Esophagus muscularis mucosa (tissue), 4 donors: ENCODE measurements at regions of chr16 and their contacts with region 1.

Region 1: GRCh38 chr16:2213817-2214720 is 571 bp downstream of the PGP start:
- DNase-seq: no peak
- H3K4me3 ChIP-seq: peak overlapping the region; percentile 79 to 89 (median 85)
- H3K27ac ChIP-seq: peak overlapping the region; percentile 86 to 93 (median 90)
- H3K4me1 ChIP-seq: peaks cover 26 to 39% (median 35%) of the 10 kb centered on the region in 4 donors
- H3K27me3 ChIP-seq: no peaks in the 10 kb centered on the region
- CTCF ChIP-seq: no peak
- EP300 ChIP-seq: no peak
- POLR2A ChIP-seq: no peak

Region 2: GRCh38 chr16:2160915-2161551 is 53.0 kb before region 1 on chr16:
- intact Hi-C with region 1: loop called (anchors 5 kb)
- DNase-seq: no peak
- H3K4me3 ChIP-seq: peak overlapping the region in 1 of 4 donors; percentile 33
- H3K27ac ChIP-seq: peak overlapping the region; percentile 90 to 96 (median 93)
- H3K4me1 ChIP-seq: peaks cover 42 to 75% (median 72%) of the 10 kb centered on the region in 4 donors
- H3K27me3 ChIP-seq: no peaks in the 10 kb centered on the region
- CTCF ChIP-seq: no peak
- EP300 ChIP-seq: no peak
- POLR2A ChIP-seq: no peak

Region 3: DNA sequence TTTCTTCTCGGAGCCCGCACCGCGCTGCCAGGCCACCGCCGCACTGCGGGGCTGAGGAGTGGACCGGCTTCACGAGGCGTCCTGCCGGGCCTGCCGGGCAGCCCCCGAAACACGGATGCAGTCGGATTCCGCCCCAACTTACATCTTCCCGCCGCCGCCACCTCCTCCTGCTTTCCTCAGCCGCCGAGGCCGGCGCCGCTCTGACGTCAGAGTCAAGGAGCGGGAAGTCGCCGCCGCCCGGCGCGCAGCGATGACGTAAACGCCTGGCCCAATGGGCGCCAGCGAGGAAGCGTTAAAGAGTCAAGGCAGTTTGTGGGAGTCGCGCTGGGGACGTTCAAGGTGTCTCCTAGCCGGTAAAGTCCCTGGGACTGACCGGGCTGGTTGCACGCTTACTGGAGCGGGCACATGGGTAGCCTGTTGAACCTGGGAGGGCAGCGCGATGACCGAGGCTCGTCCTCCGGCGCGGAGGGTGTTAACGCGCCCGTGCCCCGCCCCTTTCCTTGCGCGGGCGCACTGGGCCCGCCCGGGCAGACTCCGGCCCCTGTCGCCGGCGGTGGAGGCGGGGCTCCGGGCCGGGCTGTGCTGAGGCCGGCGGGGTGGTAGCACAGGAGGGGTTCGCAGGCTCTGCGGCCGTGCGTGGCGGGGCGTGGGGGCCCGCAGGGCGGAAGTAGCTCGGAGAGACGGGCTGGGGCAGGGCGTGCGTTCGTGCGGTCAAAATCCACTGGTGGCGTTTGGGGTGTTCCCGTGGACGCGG is 54.0 kb after region 1 on chr16 and contains the start of gene RNPS1:
- intact Hi-C with region 1: no loop called
- DNase-seq: peak; percentile 99
- H3K4me3 ChIP-seq: peak within 1 kb of the TSS; percentile 82 to 91 (median 84)
- H3K27ac ChIP-seq: peak within 1 kb of the TSS; percentile 87 to 97 (median 92)
- H3K4me1 ChIP-seq: peaks cover 30 to 75% (median 49%) of the 10 kb centered on the region in 4 donors
- H3K27me3 ChIP-seq: no peaks in the 10 kb centered on the region
- CTCF ChIP-seq: peak in 1 of 3 experiments; percentile 25
- EP300 ChIP-seq: no peak
- POLR2A ChIP-seq: peak; percentile 99
- total RNA-seq, gene RNPS1: 114 to 179 (median 151) TPM